ENCODE measurements at regions of chr12 and their contacts with region 1.

Region 1: GRCh38 chr12:55073043-55074022 is 52.9 kb upstream of the OR9K2 start:
- DNase-seq: peak; percentile 79
- H3K4me3 Mint-ChIP-seq: no peak overlapping the region
- H3K27ac Mint-ChIP-seq: no peak overlapping the region
- H3K4me1 Mint-ChIP-seq: peaks cover under 1% of the 10 kb centered on the region
- H3K27me3 Mint-ChIP-seq: peaks cover 19% of the 10 kb centered on the region

Region 2: GRCh38 chr12:54641554-54641953 is 431.8 kb before region 1 on chr12:
- CTCF ChIA-PET with region 1: no interaction called
- POLR2A ChIA-PET with region 1: no interaction called
- DNase-seq: no peak
- H3K4me3 Mint-ChIP-seq: no peak overlapping the region
- H3K27ac Mint-ChIP-seq: no peak overlapping the region
- H3K4me1 Mint-ChIP-seq: no peaks in the 10 kb centered on the region
- H3K27me3 Mint-ChIP-seq: peaks cover 33% of the 10 kb centered on the region

Region 3: GRCh38 chr12:54701940-54702592 is 371.3 kb before region 1 on chr12:
- CTCF ChIA-PET with region 1: interaction called, 36 read pairs
- POLR2A ChIA-PET with region 1: interaction called, 3 read pairs
- DNase-seq: no peak
- H3K4me3 Mint-ChIP-seq: no peak overlapping the region
- H3K27ac Mint-ChIP-seq: no peak overlapping the region
- H3K4me1 Mint-ChIP-seq: no peaks in the 10 kb centered on the region
- H3K27me3 Mint-ChIP-seq: peaks cover 11% of the 10 kb centered on the region

Region 4: GRCh38 chr12:54749191-54749818 is 324.0 kb before region 1 on chr12:
- CTCF ChIA-PET with region 1: interaction called, 122 read pairs
- POLR2A ChIA-PET with region 1: interaction called, 4 read pairs
- DNase-seq: peak; percentile 39
- H3K4me3 Mint-ChIP-seq: peak overlapping the region; percentile 36
- H3K27ac Mint-ChIP-seq: no peak overlapping the region
- H3K4me1 Mint-ChIP-seq: peaks cover 19% of the 10 kb centered on the region
- H3K27me3 Mint-ChIP-seq: no peaks in the 10 kb centered on the region

Region 5: DNA sequence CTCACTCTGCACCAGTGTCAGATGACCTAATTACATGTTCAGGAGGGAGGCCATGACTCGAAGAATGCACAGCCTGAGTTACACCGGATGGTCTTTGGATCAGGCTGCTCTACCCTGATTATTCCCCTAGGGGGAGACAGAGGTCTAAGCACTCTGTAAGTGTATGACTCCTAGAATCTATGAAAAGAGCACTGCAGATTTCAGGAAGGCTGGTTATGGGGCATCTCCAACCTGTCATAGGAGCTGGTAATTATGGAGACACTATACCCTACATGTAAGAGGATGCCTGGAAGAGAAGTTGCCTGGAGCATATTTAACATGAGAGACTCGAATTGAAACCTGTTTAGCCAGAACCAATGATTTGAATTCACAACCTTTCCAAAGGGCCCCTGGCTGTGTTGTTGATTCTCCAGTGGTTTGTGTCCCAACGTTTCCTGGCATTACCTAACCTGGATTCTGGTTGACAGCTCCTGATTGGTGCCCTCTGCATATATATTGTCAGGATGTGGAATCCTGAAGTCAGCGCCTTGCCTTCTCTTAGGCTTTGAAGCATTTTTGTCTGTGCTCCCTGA is 219.3 kb before region 1 on chr12 and contains the start of gene MUCL1:
- CTCF ChIA-PET with region 1: interaction called, 29 read pairs
- POLR2A ChIA-PET with region 1: no interaction called
- DNase-seq: peak; percentile 76
- H3K4me3 Mint-ChIP-seq: no peak within 1 kb of the TSS
- H3K27ac Mint-ChIP-seq: no peak within 1 kb of the TSS
- H3K4me1 Mint-ChIP-seq: peaks cover 10% of the 10 kb centered on the region
- H3K27me3 Mint-ChIP-seq: peaks cover 7% of the 10 kb centered on the region
- total RNA-seq, gene MUCL1: not detected

Region 6: GRCh38 chr12:54967461-54967860 is 105.9 kb before region 1 on chr12:
- CTCF ChIA-PET with region 1: interaction called, 12 read pairs
- POLR2A ChIA-PET with region 1: interaction called, 3 read pairs
- DNase-seq: no peak
- H3K4me3 Mint-ChIP-seq: no peak overlapping the region
- H3K27ac Mint-ChIP-seq: peak overlapping the region; percentile 79
- H3K4me1 Mint-ChIP-seq: peaks cover 46% of the 10 kb centered on the region
- H3K27me3 Mint-ChIP-seq: no peaks in the 10 kb centered on the region

Region 7: DNA sequence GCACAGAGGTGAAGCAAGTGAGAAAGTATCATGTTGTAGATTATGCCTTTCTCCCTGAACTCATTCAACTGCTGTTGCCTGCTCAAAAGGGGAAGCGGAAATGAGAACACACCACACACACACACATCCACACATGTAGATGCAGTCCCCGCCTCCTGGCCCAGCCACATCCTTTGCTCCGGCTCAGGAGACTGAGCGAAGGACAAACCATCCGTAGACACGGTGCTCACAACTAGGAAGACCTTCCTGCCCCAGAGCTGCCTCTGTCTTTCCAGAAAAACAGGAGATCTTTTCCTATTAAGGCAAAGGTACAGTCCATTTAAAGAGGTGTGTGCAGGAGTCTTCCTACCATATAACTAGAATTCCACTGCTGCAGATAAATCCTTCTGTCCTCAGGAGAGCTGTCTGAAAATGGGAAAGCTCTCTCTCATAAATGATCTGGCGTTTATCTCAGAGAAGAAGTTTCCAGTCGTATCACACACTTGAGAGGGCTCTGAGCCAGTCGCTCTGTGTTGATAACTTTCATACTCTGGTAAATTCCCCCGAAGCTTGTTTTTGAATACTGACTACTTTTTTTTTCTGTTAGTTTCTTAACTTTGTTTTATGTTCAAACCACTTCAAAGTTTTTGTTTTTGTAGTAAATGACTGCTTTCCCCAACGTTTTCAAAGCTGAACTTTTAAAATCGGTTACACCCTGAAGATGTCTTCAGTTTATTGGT is 88.5 kb before region 1 on chr12 and contains the start of gene TESPA1:
- CTCF ChIA-PET with region 1: interaction called, 24 read pairs
- POLR2A ChIA-PET with region 1: interaction called, 4 read pairs
- DNase-seq: peak; percentile 91
- H3K4me3 Mint-ChIP-seq: peak within 1 kb of the TSS; percentile 79
- H3K27ac Mint-ChIP-seq: peak within 1 kb of the TSS; percentile 85
- H3K4me1 Mint-ChIP-seq: peaks cover 72% of the 10 kb centered on the region
- H3K27me3 Mint-ChIP-seq: no peaks in the 10 kb centered on the region
- total RNA-seq, gene TESPA1: 111 to 112 TPM

Region 8: DNA sequence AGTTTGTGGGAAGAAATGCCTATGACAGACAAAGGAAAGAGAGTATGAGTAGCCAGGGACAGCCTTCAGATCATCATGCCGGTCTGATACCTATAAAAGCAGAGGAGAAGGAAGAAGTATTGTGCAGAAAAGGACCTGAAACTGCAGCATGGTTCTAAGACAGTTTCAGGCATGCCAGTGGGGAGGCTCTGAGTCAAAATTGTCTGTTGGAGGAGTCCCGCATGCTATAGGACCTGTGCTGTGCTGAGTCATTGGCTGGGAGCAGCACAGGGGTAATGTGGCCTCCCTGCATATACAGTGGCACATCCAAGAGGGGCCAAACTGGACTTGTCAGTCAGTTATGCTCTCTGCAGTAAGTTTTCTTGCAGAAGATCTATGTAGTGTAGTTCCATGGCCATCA is 12.9 kb before region 1 on chr12:
- CTCF ChIA-PET with region 1: interaction called, 16 read pairs
- POLR2A ChIA-PET with region 1: interaction called, 4 read pairs
- DNase-seq: peak; percentile 40
- H3K4me3 Mint-ChIP-seq: no peak overlapping the region
- H3K27ac Mint-ChIP-seq: no peak overlapping the region
- H3K4me1 Mint-ChIP-seq: peaks cover 10% of the 10 kb centered on the region
- H3K27me3 Mint-ChIP-seq: peaks cover 4% of the 10 kb centered on the region

Measured in activated CD4-positive, alpha-beta memory T cell treated with anti-CD3 and anti-CD28 coated beads, Interleukin-2, amount 10 ng/mL, durations not matched to agents 7 days and 5 days (primary cell).